Activated CD4-positive, alpha-beta memory T cell treated with anti-CD3 and anti-CD28 coated beads for 36 hours (primary cell): ENCODE measurements at regions of chr9 and their contacts with region 1.

Region 1: DNA sequence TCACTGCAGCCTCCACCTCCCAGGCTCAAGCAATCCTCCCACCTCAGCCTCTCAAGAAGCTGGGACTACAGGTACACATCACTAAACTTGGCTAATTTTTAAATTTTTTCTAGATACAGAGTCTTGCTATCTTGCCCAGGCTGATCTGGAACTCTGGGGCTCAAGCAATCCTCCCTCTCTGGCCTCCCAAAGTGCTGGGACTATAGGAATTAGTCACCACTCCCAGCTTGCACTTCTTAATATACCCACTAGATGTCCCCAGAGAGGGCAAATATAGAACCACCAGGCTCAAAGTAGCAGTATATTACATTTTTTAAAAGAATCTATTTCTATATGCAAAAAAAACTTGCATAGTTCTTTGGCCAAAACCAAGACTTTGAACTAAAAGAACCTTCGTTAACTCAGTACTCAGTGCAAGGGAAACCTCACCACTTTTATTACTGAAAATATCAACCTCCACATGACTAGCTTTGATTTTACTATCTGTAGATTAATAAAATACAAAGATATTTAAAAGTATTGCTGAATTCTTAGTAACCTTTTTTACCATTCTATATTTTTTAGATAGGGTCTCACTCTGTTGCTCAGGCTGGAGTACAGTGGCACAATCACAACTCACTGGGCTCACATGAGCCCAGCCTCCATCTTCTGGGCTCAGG is 25.8 kb upstream of the HSD17B3 start:
- DNase-seq: peak; percentile 52
- H3K4me3 Mint-ChIP-seq: no peak overlapping the region
- H3K27ac Mint-ChIP-seq: no peak overlapping the region
- H3K4me1 Mint-ChIP-seq: no peaks in the 10 kb centered on the region
- H3K27me3 Mint-ChIP-seq: no peaks in the 10 kb centered on the region

Region 2: GRCh38 chr9:96217754-96218693 is 109.8 kb before region 1 on chr9:
- CTCF ChIA-PET with region 1: no interaction called
- POLR2A ChIA-PET with region 1: no interaction called
- intact Hi-C with region 1: no loop called
- DNase-seq: peak; percentile 77
- H3K4me3 Mint-ChIP-seq: peak overlapping the region; percentile 48
- H3K27ac Mint-ChIP-seq: no peak overlapping the region
- H3K4me1 Mint-ChIP-seq: peaks cover 16% of the 10 kb centered on the region
- H3K27me3 Mint-ChIP-seq: peaks cover 52% of the 10 kb centered on the region

Region 3: GRCh38 chr9:96232539-96233241 is 95.1 kb before region 1 on chr9:
- CTCF ChIA-PET with region 1: interaction called, 12 read pairs
- POLR2A ChIA-PET with region 1: no interaction called
- intact Hi-C with region 1: no loop called
- DNase-seq: peak; percentile 54
- H3K4me3 Mint-ChIP-seq: no peak overlapping the region
- H3K27ac Mint-ChIP-seq: no peak overlapping the region
- H3K4me1 Mint-ChIP-seq: no peaks in the 10 kb centered on the region
- H3K27me3 Mint-ChIP-seq: peaks cover 37% of the 10 kb centered on the region

Region 4: GRCh38 chr9:96317335-96317980 is 10.4 kb before region 1 on chr9:
- CTCF ChIA-PET with region 1: interaction called, 12 read pairs
- POLR2A ChIA-PET with region 1: no interaction called
- intact Hi-C with region 1: no loop called
- DNase-seq: peak; percentile 55
- H3K4me3 Mint-ChIP-seq: no peak overlapping the region
- H3K27ac Mint-ChIP-seq: no peak overlapping the region
- H3K4me1 Mint-ChIP-seq: no peaks in the 10 kb centered on the region
- H3K27me3 Mint-ChIP-seq: no peaks in the 10 kb centered on the region

Region 5: DNA sequence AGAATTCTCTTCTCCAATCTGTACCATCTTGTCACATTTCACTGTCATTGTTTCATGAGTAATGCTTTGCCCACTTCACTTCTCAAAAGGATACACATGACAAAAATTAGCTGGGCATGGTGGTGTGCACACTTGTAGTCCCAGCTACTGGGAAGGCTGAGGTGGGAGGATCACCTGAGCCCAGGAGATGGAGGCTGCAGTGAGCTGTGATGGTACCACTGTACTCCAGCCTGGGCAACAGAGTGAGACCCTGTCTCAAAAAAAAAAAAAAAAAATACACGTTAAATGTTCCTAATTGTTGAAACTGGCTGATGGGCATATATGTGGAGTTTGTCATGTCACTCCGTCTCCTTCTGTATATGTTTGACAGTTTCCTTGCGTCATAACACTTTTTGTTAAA is 10.5 kb after region 1 on chr9:
- CTCF ChIA-PET with region 1: interaction called, 12 read pairs
- POLR2A ChIA-PET with region 1: no interaction called
- intact Hi-C with region 1: no loop called
- DNase-seq: no peak
- H3K4me3 Mint-ChIP-seq: no peak overlapping the region
- H3K27ac Mint-ChIP-seq: no peak overlapping the region
- H3K4me1 Mint-ChIP-seq: peaks cover 9% of the 10 kb centered on the region
- H3K27me3 Mint-ChIP-seq: no peaks in the 10 kb centered on the region

Region 6: DNA sequence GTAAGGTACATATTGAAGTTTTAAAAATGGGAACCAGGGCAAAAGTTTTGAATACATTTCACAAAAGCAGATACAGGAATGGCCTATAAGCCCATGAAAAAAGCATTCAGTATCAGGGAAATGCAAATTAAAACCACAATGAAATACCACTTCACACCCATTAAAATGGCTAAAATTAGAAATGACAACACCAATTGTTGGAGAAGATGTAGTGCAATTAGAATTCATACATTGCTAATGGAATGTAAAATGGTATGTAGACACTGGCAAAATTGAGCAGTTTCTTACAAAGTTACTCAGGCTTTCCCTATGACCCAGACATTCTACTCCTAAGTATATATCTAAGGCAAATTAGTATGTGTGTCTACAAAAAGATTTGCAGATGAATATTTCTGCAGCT is 257.6 kb after region 1 on chr9:
- CTCF ChIA-PET with region 1: no interaction called
- POLR2A ChIA-PET with region 1: no interaction called
- intact Hi-C with region 1: no loop called
- DNase-seq: no peak
- H3K4me3 Mint-ChIP-seq: no peak overlapping the region
- H3K27ac Mint-ChIP-seq: no peak overlapping the region
- H3K4me1 Mint-ChIP-seq: peaks cover 9% of the 10 kb centered on the region
- H3K27me3 Mint-ChIP-seq: peaks cover 9% of the 10 kb centered on the region

Region 7: GRCh38 chr9:96654443-96655197 is 326.8 kb after region 1 on chr9:
- CTCF ChIA-PET with region 1: interaction called, 12 read pairs
- POLR2A ChIA-PET with region 1: no interaction called
- intact Hi-C with region 1: loop called (anchors 5 kb)
- DNase-seq: peak; percentile 77
- H3K4me3 Mint-ChIP-seq: peak overlapping the region; percentile 85
- H3K27ac Mint-ChIP-seq: peak overlapping the region; percentile 70
- H3K4me1 Mint-ChIP-seq: peaks cover 13% of the 10 kb centered on the region
- H3K27me3 Mint-ChIP-seq: no peaks in the 10 kb centered on the region

Region 8: GRCh38 chr9:96667361-96667728 is 339.5 kb after region 1 on chr9:
- CTCF ChIA-PET with region 1: interaction called, 36 read pairs
- POLR2A ChIA-PET with region 1: no interaction called
- intact Hi-C with region 1: loop called (anchors 2 kb)
- DNase-seq: no peak
- H3K4me3 Mint-ChIP-seq: no peak overlapping the region
- H3K27ac Mint-ChIP-seq: no peak overlapping the region
- H3K4me1 Mint-ChIP-seq: no peaks in the 10 kb centered on the region
- H3K27me3 Mint-ChIP-seq: peaks cover 6% of the 10 kb centered on the region